Psoas muscle (tissue), 8 donors: ENCODE measurements at regions of chr7 and their contacts with region 1.

Region 1: GRCh38 chr7:124784879-124785818 is 19.6 kb upstream of the GPR37 start:
- DNase-seq: peak; percentile 19 to 53
- ATAC-seq: peak in 3 of 4 donors; percentile 70 to 90 (median 81)
- H3K4me3 ChIP-seq: no peak overlapping the region
- H3K27ac ChIP-seq: no peak overlapping the region
- H3K4me1 ChIP-seq: no peaks in the 10 kb centered on the region
- H3K27me3 ChIP-seq: no peaks in the 10 kb centered on the region
- CTCF ChIP-seq: peak; percentile 61

Region 2: GRCh38 chr7:124152859-124153692 is 632.1 kb before region 1 on chr7:
- intact Hi-C with region 1: loop called (anchors 5 to 10 kb)
- DNase-seq: no peak
- ATAC-seq: no peak
- H3K4me3 ChIP-seq: no peak overlapping the region
- H3K27ac ChIP-seq: no peak overlapping the region
- H3K4me1 ChIP-seq: no peaks in the 10 kb centered on the region
- H3K27me3 ChIP-seq: no peaks in the 10 kb centered on the region
- CTCF ChIP-seq: peak; percentile 7

Region 3: GRCh38 chr7:124672011-124672410 is 113.1 kb before region 1 on chr7:
- intact Hi-C with region 1: loop called in 1 of 2 experiments (anchors 10 kb)
- DNase-seq: no peak
- ATAC-seq: no peak
- H3K4me3 ChIP-seq: no peak overlapping the region
- H3K27ac ChIP-seq: no peak overlapping the region
- H3K4me1 ChIP-seq: peaks cover 3% of the 10 kb centered on the region
- H3K27me3 ChIP-seq: no peaks in the 10 kb centered on the region
- CTCF ChIP-seq: no peak

Region 4: DNA sequence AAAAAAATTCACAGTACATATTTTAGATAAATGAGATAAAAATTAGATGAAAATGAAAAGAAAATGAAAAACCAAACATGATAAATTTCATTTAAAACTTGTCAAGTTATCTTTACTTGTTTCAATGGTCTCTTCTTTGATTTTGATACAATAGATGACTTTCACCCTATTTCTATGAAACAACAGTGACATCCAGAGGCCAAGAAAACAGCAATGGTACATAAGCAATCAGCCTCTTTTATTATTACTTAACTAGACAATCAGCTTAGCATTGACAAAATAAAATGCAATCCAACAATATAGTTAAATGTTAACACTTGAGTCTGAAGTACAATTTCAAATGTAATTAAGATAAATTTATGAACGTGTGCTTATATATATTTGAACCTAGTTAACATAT is 55.3 kb after region 1 on chr7:
- intact Hi-C with region 1: no loop called
- DNase-seq: no peak
- ATAC-seq: no peak
- H3K4me3 ChIP-seq: no peak overlapping the region
- H3K27ac ChIP-seq: no peak overlapping the region
- H3K4me1 ChIP-seq: no peaks in the 10 kb centered on the region
- H3K27me3 ChIP-seq: no peaks in the 10 kb centered on the region
- CTCF ChIP-seq: peak; percentile 12